Activated CD4-positive, alpha-beta T cell treated with anti-CD3 and anti-CD28 coated beads, Interleukin-2, amount 10 ng/mL, durations not matched to agents 24 days and 14 days (primary cell): ENCODE measurements at regions of chr1 and their contacts with region 1.

Region 1: GRCh38 chr1:65393347-65393746 is 27.1 kb upstream of the LEPR start:
- DNase-seq: peak; percentile 81
- H3K4me3 Mint-ChIP-seq: peak overlapping the region; percentile 38
- H3K27ac Mint-ChIP-seq: peak overlapping the region; percentile 54
- H3K4me1 Mint-ChIP-seq: peaks cover 72% of the 10 kb centered on the region
- H3K27me3 Mint-ChIP-seq: no peaks in the 10 kb centered on the region

Region 2: GRCh38 chr1:65148548-65149350 is 244.6 kb before region 1 on chr1:
- intact Hi-C with region 1: loop called (anchors 10 kb)
- DNase-seq: peak; percentile 90
- H3K4me3 Mint-ChIP-seq: peak overlapping the region; percentile 93
- H3K27ac Mint-ChIP-seq: peak overlapping the region; percentile 96
- H3K4me1 Mint-ChIP-seq: peaks cover 41% of the 10 kb centered on the region
- H3K27me3 Mint-ChIP-seq: peaks cover 13% of the 10 kb centered on the region

Region 3: DNA sequence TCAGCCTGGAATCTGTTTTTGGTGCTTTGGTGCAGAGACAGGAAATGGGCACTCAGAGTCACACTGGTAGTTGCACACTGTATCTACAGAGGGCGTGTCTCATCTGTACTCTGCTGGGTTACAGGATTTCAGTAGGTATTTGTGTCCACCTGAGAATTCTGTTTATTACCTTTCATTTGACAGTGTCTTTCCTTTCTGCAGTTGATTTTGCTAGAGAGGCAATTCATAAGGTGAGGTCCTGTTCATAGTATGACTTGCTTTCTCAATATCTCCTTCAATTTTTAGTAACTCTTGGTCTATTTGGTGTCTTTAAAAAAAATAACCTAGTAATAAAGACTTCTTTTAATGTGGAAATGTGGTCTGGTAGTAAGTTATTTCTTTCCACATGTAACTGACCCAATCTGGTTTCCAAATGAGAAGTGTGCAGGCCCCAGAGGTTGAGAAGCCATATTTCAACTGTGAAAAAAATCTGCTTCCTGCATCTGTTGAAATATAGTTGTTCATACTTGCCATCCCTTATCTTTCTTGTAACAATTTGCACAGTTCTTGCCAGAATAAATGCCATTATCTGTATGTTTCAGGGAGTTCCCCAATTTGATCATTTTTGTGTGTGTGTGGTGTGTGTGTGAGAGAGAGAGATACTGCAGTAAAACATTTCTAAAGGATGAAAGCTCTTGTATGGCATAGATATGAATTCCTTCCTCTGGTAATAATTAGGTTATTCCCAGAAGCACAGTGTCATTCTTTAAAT is 162.4 kb before region 1 on chr1:
- intact Hi-C with region 1: loop called (anchors 2 kb)
- DNase-seq: no peak
- H3K4me3 Mint-ChIP-seq: peak overlapping the region; percentile 71
- H3K27ac Mint-ChIP-seq: peak overlapping the region; percentile 93
- H3K4me1 Mint-ChIP-seq: peaks cover 28% of the 10 kb centered on the region
- H3K27me3 Mint-ChIP-seq: no peaks in the 10 kb centered on the region

Region 4: GRCh38 chr1:65431111-65431705 is 37.9 kb after region 1 on chr1:
- intact Hi-C with region 1: loop called (anchors 5 kb)
- DNase-seq: peak; percentile 64
- H3K4me3 Mint-ChIP-seq: no peak overlapping the region
- H3K27ac Mint-ChIP-seq: no peak overlapping the region
- H3K4me1 Mint-ChIP-seq: peaks cover 14% of the 10 kb centered on the region
- H3K27me3 Mint-ChIP-seq: no peaks in the 10 kb centered on the region

Region 5: GRCh38 chr1:65793359-65793732 is 400.0 kb after region 1 on chr1:
- intact Hi-C with region 1: no loop called
- DNase-seq: no peak
- H3K4me3 Mint-ChIP-seq: peak overlapping the region; percentile 62
- H3K27ac Mint-ChIP-seq: no peak overlapping the region
- H3K4me1 Mint-ChIP-seq: peaks cover 8% of the 10 kb centered on the region
- H3K27me3 Mint-ChIP-seq: peaks cover 62% of the 10 kb centered on the region

Region 6: DNA sequence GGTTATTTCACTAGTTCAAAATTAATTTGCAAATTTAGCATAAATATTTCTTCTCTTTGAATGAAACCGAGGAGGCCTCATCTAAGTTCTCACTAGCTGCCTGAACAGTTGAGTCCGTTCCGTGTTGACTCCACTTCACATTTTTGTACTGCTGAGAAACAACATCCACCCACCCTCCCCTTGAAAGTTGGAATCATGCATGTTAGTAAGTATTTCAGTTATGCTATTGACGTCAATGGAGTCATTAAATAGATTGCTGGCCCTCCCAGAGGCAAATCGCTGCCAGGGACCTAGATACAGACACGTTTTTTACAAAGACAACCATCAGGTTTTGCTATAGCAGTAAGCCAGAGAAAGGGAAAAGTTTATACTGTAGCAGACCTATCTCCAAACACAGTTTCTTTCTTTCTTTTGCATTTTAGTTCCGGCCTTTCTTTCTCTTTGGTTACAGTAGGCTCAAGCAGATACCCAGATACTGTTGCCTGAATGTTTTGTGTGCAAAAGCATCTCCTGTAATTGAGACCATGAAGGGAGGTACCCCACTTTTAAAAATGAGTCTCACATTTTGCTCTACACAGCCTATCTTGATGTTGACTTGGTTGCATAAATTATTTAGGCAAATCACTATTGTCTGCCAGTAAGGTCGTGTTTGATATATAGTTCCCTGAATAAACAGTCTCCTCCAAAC is 878.0 kb after region 1 on chr1:
- intact Hi-C with region 1: loop called (anchors 5 kb)
- DNase-seq: peak; percentile 81
- H3K4me3 Mint-ChIP-seq: peak overlapping the region; percentile 67
- H3K27ac Mint-ChIP-seq: peak overlapping the region; percentile 88
- H3K4me1 Mint-ChIP-seq: peaks cover 62% of the 10 kb centered on the region
- H3K27me3 Mint-ChIP-seq: no peaks in the 10 kb centered on the region